Sigmoid colon (tissue), 7 donors: ENCODE measurements at regions of chr4 and their contacts with region 1.

Region 1: DNA sequence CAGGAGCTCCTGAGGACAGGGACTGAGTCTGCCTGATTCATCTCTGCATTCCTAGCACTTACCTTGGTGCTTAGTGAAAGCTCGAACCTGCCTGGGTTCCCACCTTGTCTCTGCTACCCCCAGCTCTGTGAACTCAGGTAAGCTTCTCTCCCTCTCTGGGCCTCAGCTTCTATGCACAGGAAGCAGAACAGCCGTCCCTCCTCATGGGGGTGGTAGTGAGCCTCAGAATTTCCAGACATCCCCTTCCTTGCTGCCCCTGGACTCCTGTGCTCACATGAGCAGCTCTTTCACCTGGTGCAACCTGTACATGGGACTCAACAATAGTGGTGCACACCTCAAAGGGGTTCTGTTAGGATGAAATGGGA is 50.8 kb downstream of the HTRA3 start:
- DNase-seq: no peak
- H3K4me3 ChIP-seq: no peak overlapping the region
- H3K27ac ChIP-seq: peak overlapping the region; percentile 78 to 91 (median 85)
- H3K4me1 ChIP-seq: peaks cover 0 to 46% (median 35%) of the 10 kb centered on the region in 4 donors
- H3K27me3 ChIP-seq: no peaks in the 10 kb centered on the region
- CTCF ChIP-seq: no peak
- EP300 ChIP-seq: no peak
- POLR2A ChIP-seq: no peak

Region 2: DNA sequence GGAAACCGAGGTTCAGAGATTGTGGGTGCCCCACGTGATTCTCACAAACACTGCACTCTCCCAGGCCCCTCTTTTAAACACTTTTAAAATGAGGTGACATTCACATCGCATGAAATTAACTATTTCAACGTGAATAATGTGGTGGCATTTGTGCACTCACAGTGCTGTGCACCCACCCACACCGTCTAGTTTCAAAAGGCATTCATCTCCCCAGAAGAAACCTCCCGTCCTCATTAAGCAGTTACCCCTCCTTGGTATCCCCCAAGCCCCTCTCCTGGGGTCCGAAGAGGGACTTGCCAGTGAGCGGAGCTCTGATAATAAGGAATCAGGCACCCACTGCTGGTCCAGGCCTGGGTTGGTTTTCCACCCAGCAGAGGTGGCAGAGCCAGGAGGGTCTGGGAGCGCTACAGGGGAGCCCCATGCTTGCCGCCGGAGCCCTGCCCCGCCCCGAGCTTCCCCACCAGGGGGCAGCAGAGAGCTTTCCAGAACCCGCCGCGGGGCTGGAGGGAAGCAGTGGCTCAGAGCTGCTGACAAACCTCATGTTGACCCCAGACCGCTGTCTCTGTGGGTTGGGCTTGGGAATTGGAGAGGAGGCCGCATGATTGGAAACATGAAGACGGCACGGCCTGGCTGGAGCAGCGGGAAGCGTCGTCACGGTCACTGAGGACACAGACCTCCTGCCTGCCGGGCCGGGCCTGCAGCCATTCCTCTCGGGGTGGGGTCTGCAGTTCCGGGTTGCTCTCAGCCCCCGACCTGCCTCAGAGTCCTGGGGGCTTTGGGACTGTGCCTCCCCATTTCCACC is 78.3 kb before region 1 on chr4:
- intact Hi-C with region 1: no loop called
- DNase-seq: peak; percentile 96
- H3K4me3 ChIP-seq: no peak overlapping the region
- H3K27ac ChIP-seq: peak overlapping the region in 3 of 4 donors; percentile 2 to 49 (median 43)
- H3K4me1 ChIP-seq: peaks cover 0 to 12% (median 11%) of the 10 kb centered on the region in 4 donors
- H3K27me3 ChIP-seq: no peaks in the 10 kb centered on the region
- CTCF ChIP-seq: peak; percentile 90 to 99 (median 92)
- EP300 ChIP-seq: no peak
- POLR2A ChIP-seq: no peak

Region 3: DNA sequence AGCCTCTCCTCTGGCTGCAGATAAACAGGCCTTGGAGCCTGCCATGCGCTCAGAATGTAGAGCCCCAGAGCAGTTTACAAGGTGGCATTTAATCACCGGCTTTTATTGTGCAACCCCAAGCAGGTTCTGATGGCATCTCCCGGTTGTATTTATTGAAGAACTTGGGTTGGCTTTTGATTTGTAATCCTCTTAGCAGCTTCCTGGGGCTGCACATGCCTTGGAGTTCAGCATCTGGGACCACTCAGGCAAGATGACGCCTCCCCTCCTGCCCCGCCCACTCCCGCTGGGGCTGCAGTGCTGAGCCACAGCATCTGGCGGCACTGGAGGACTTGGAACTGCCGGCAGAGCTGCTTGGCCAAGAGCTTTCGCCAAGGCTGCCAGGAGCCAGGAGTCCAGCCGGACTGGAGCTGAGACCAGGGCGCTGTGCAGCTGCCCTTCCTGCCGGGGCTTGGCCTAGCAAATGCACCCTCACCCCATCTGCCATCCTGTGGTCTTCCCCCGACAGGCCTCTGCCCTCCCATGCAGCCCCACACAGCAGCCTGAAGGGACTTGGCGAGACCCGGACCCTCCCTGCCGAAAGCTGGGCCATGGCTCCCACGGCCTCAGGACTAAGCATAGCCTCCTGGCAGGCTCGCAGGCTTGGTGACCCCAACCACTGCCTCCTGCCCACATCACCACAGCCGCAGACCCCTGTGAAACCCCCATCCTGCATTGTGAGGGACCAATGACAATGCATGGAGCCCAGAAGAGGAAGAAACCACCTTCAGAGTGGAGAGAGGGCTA is 45.4 kb before region 1 on chr4:
- intact Hi-C with region 1: loop called (anchors 2 kb)
- DNase-seq: peak; percentile 98
- H3K4me3 ChIP-seq: no peak overlapping the region
- H3K27ac ChIP-seq: peak overlapping the region; percentile 63 to 89 (median 84)
- H3K4me1 ChIP-seq: peaks cover 0 to 98% (median 92%) of the 10 kb centered on the region in 4 donors
- H3K27me3 ChIP-seq: no peaks in the 10 kb centered on the region
- CTCF ChIP-seq: peak in 3 of 4 experiments; percentile 23 to 51 (median 50)
- EP300 ChIP-seq: peak in 2 of 4 donors; percentile 76
- POLR2A ChIP-seq: no peak

Region 4: GRCh38 chr4:8340781-8341241 is 20.4 kb after region 1 on chr4:
- intact Hi-C with region 1: loop called (anchors 1 kb)
- DNase-seq: peak; percentile 96
- H3K4me3 ChIP-seq: no peak overlapping the region
- H3K27ac ChIP-seq: peak overlapping the region; percentile 63 to 80 (median 77)
- H3K4me1 ChIP-seq: peaks cover 0 to 44% (median 40%) of the 10 kb centered on the region in 4 donors
- H3K27me3 ChIP-seq: no peaks in the 10 kb centered on the region
- CTCF ChIP-seq: no peak
- EP300 ChIP-seq: peak in 1 of 4 donors; percentile 34
- POLR2A ChIP-seq: no peak

Region 5: GRCh38 chr4:8391972-8392371 is 71.6 kb after region 1 on chr4:
- intact Hi-C with region 1: loop called (anchors 2 kb)
- DNase-seq: peak; percentile 91
- H3K4me3 ChIP-seq: no peak overlapping the region
- H3K27ac ChIP-seq: peak overlapping the region; percentile 75 to 82 (median 78)
- H3K4me1 ChIP-seq: peaks cover 0 to 46% (median 41%) of the 10 kb centered on the region in 4 donors
- H3K27me3 ChIP-seq: no peaks in the 10 kb centered on the region
- CTCF ChIP-seq: no peak
- EP300 ChIP-seq: peak in 2 of 4 donors; percentile 45 to 85
- POLR2A ChIP-seq: no peak

Region 6: DNA sequence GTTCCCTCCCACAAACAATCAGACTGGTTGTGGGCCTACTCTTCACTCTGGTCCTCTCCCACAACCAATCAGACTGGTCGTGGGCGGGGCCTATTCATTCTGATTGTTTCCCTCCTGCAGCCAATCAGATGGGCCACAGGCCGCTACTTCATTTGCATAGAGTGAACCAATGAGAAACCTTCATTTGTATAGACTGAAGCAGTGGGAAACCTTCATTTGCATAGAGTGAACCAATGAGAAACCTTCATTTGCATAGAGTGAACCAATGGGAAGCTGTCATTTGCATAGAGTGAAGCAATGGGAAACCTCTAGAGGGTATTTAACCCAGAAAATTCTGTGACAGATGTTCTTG is 175.5 kb after region 1 on chr4:
- intact Hi-C with region 1: no loop called
- DNase-seq: no peak
- H3K4me3 ChIP-seq: no peak overlapping the region
- H3K27ac ChIP-seq: no peak overlapping the region
- H3K4me1 ChIP-seq: no peaks in the 10 kb centered on the region
- H3K27me3 ChIP-seq: no peaks in the 10 kb centered on the region
- CTCF ChIP-seq: no peak
- EP300 ChIP-seq: no peak
- POLR2A ChIP-seq: no peak